Psoas muscle (tissue), 8 donors: ENCODE measurements at regions of chr18 and their contacts with region 1.

Region 1: GRCh38 chr18:6543330-6543908 is 128.7 kb upstream of the L3MBTL4 start:
- DNase-seq: no peak
- ATAC-seq: peak in 2 of 4 donors; percentile 32 to 67
- H3K4me3 ChIP-seq: no peak overlapping the region
- H3K27ac ChIP-seq: no peak overlapping the region
- H3K4me1 ChIP-seq: peaks cover 9% of the 10 kb centered on the region
- H3K27me3 ChIP-seq: no peaks in the 10 kb centered on the region
- CTCF ChIP-seq: peak; percentile 66

Region 2: GRCh38 chr18:6811816-6812215 is 268.4 kb after region 1 on chr18:
- intact Hi-C with region 1: no loop called
- DNase-seq: no peak
- ATAC-seq: no peak
- H3K4me3 ChIP-seq: no peak overlapping the region
- H3K27ac ChIP-seq: no peak overlapping the region
- H3K4me1 ChIP-seq: no peaks in the 10 kb centered on the region
- H3K27me3 ChIP-seq: no peaks in the 10 kb centered on the region
- CTCF ChIP-seq: no peak

Region 3: DNA sequence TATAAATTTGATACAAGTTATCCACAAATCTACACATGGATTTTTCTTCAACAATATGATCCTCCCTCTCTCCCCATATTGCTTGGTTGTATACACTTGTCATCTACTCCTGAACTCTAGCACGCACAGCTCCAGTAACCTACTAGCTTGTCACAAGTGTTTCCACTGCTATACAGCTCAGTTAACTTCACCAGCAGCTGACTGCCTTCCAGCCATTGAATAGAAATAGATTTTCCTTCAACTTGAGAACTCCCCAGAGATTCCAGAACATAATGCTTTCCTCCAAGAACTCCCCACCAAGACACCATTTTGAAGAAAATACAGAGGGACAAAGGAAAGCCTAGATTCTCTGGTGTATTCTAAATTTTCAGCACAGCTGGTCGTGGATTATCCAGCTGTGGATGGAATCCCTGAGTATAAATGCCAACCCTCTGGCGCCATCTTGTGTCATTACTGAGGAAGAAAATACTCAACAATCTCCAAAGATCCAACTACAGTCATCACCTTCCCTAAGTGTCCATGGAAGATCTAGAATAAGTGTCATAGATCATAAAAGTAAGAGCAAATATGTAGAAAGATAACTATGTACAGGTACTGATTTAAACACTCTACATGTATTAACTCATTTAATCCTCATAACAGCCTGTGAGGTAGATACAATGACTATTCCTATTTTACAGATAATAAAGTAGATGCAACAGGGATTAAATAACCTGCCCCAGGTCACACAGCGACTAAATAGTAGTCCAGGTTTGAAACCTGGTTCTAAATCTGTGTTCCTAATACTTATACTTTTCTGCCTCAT is 342.8 kb after region 1 on chr18:
- intact Hi-C with region 1: loop called (anchors 2 to 5 kb)
- DNase-seq: no peak
- ATAC-seq: peak; percentile 36 to 86 (median 69)
- H3K4me3 ChIP-seq: no peak overlapping the region
- H3K27ac ChIP-seq: no peak overlapping the region
- H3K4me1 ChIP-seq: peaks cover under 1% of the 10 kb centered on the region
- H3K27me3 ChIP-seq: no peaks in the 10 kb centered on the region
- CTCF ChIP-seq: peak; percentile 74